PC-9 (cell line): ENCODE measurements at regions of chr11 and their contacts with region 1.

Region 1: DNA sequence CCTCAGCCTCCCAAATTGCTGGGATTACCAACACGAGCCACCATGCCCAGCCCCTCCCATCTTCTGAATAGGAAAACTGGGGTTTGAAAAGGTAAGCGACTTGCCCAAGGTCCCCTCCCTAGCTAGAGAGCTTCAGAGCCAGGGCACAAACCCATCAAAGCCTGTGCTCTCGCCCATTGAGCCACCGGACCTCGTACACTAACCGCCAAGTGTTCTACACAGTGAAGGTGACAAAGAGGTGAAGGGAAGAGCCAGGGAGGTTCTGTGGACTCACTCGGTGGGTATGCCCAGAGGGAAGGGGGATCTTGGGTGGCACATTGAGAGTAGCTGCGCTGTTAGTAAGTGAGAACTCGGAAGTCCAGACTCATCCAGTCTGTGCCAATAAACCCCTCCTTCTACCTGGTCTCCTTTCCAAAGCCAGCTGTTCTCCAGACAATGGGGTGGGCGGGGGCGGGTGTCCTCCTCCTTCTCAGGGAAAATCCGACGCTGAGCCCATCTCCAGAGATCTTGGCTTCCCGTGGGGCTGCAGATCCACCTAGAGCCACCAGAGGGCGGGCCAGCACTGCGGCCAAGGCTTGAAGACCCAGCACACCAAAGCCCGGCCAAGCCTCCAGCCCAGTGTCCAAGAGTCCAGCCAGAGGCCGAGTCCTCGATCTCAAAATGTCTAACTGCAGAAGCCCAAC is 3.2 kb upstream of the RTN4RL2 start:
- DNase-seq: peak; percentile 74 to 90
- H3K4me3 ChIP-seq: no peak overlapping the region
- H3K27ac ChIP-seq: no peak overlapping the region
- H3K4me1 ChIP-seq: peaks cover 22% of the 10 kb centered on the region
- H3K27me3 ChIP-seq: peaks cover 22% of the 10 kb centered on the region
- CTCF ChIP-seq: peak; percentile 100

Region 2: GRCh38 chr11:57277845-57278709 is 179.0 kb before region 1 on chr11:
- CTCF ChIA-PET with region 1: no interaction called
- POLR2A ChIA-PET with region 1: no interaction called
- intact Hi-C with region 1: no loop called
- DNase-seq: peak; percentile 78 to 94
- H3K4me3 ChIP-seq: peak overlapping the region; percentile 49
- H3K27ac ChIP-seq: peak overlapping the region; percentile 90
- H3K4me1 ChIP-seq: peaks cover 38% of the 10 kb centered on the region
- H3K27me3 ChIP-seq: no peaks in the 10 kb centered on the region
- CTCF ChIP-seq: peak; percentile 89

Region 3: DNA sequence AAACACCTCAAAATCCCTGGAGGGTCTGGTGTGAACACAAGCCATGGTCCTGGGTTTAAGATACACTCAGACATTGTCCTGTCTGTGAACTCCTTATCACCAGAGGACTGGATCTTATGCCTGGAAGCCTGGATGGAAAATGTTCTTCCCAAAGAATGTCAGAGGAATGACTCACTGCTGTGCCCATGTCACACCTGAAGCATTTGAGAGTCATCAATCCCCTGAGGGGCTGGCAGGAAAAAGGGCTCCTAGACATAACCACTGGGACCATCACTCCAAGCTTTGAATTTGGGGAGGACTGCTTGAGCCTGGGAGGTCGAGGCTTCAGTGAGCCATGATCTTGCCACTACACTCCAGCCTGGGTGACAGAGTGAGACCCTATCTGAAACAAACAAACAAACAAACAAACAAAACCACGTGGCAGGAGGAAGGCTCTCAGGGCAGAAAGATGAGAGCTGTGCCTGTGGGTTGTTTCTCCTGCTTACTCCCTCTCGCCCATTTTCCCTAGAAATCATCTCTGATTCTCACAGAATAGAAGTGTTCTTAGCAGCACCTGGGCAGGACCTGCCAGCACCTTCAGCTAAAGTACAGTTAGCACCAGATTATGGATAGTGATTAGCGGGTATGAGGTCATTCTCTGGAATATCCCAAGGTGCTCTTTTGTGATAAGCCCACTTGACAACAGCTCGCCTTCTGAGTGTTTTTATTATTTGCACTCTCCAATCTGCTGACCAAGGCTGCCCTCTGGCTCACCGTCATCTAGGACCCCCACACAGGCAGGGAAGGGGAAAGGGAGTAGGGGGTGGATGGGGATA is 54.7 kb before region 1 on chr11:
- CTCF ChIA-PET with region 1: interaction called, 10 read pairs
- POLR2A ChIA-PET with region 1: no interaction called
- intact Hi-C with region 1: no loop called
- DNase-seq: peak; percentile 64 to 79
- H3K4me3 ChIP-seq: no peak overlapping the region
- H3K27ac ChIP-seq: peak overlapping the region; percentile 45
- H3K4me1 ChIP-seq: peaks cover 18% of the 10 kb centered on the region
- H3K27me3 ChIP-seq: 0 out of 2 replicates have a peak, but pooled peaks cover under 1% of the 10 kb centered on the region
- CTCF ChIP-seq: no peak

Region 4: GRCh38 chr11:57530596-57531507 is 73.8 kb after region 1 on chr11 and contains the start of gene TIMM10:
- CTCF ChIA-PET with region 1: interaction called, 13 read pairs
- POLR2A ChIA-PET with region 1: no interaction called
- intact Hi-C with region 1: loop called (anchors 1 kb)
- DNase-seq: peak; percentile 98 to 99
- H3K4me3 ChIP-seq: peak within 1 kb of the TSS; percentile 83
- H3K27ac ChIP-seq: peak within 1 kb of the TSS; percentile 48
- H3K4me1 ChIP-seq: peaks cover 27% of the 10 kb centered on the region
- H3K27me3 ChIP-seq: peaks cover 4% of the 10 kb centered on the region; the same call in 1 of the 2 replicates
- CTCF ChIP-seq: peak; percentile 23; the same call in 1 of the 2 replicates
- total RNA-seq, gene TIMM10: 90.2 and 94.7 TPM in 2 replicates

Region 5: GRCh38 chr11:57644748-57645688 is 187.9 kb after region 1 on chr11:
- CTCF ChIA-PET with region 1: interaction called, 18 read pairs
- POLR2A ChIA-PET with region 1: no interaction called
- intact Hi-C with region 1: loop called (anchors 1 kb)
- DNase-seq: peak; percentile 60 to 83
- H3K4me3 ChIP-seq: no peak overlapping the region
- H3K27ac ChIP-seq: no peak overlapping the region
- H3K4me1 ChIP-seq: peaks cover 3% of the 10 kb centered on the region; the same call in 1 of the 2 replicates
- H3K27me3 ChIP-seq: peaks cover 46% of the 10 kb centered on the region
- CTCF ChIP-seq: peak; percentile 98